SK-N-SH (cell line): ENCODE measurements at regions of chr3 and their contacts with region 1.

Region 1: DNA sequence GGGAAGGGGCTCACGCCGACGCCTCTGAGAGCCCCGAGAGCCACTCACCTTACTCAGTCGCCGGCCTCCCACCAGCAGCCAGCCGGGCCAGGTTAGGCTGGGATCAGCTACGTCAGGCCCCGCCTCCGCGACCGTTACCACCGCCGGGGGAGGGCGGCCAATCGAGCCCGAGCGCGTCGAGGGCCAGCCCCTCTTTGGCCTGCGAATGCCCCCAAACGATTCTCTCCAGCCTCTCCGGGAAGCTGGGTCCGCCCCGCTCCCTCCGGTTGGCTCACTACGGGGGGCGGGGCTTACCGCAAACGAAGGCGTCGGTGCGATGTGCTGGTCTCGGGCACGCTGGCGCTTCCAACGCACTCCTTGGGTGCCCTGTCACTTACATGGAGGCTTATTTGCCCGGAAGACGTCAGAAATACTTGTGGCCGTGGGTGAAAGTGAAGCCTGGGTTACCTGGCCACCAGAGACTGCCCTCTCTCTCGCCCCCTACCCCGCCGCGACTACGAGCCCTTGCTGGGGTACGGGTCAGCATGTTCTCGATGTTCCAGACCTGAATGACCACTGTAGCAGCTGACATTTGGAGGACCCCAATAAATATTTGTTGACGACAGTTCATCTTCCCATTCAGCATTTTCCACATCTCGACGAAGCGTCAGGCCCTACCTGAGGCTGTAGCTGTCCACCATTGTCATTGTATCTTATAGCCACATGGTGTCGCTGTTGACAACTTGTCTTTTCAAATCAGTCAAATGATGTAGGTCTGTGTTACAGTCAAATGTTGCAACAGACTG is at the start of gene CEP70:
- DNase-seq: peak; percentile 95
- H3K4me3 ChIP-seq: peak within 1 kb of the TSS; percentile 79 to 92
- H3K27ac ChIP-seq: peak within 1 kb of the TSS; percentile 72 to 85
- H3K4me1 ChIP-seq: peaks cover 0 to 7% of the 10 kb centered on the region in 2 experiments; a peak in 2 of 4 replicates
- H3K27me3 ChIP-seq: no peaks in the 10 kb centered on the region
- CTCF ChIP-seq: peak; percentile 88
- EP300 ChIP-seq: no peak
- RAD21 ChIP-seq: peak; percentile 90
- polyA plus RNA-seq, gene CEP70: 3.7 and 4.0 TPM in 2 replicates

Region 2: GRCh38 chr3:138417559-138417982 is 176.8 kb before region 1 on chr3:
- CTCF ChIA-PET with region 1: interaction called, 16 read pairs
- POLR2A ChIA-PET with region 1: no interaction called
- DNase-seq: peak; percentile 80
- H3K4me3 ChIP-seq: peak overlapping the region in 1 of 2 experiments; percentile 17; a peak in 1 of 4 replicates
- H3K27ac ChIP-seq: no peak overlapping the region
- H3K4me1 ChIP-seq: no peaks in the 10 kb centered on the region; a peak in 2 of 4 replicates
- H3K27me3 ChIP-seq: no peaks in the 10 kb centered on the region
- CTCF ChIP-seq: peak; percentile 93
- EP300 ChIP-seq: no peak
- RAD21 ChIP-seq: peak; percentile 78

Region 3: DNA sequence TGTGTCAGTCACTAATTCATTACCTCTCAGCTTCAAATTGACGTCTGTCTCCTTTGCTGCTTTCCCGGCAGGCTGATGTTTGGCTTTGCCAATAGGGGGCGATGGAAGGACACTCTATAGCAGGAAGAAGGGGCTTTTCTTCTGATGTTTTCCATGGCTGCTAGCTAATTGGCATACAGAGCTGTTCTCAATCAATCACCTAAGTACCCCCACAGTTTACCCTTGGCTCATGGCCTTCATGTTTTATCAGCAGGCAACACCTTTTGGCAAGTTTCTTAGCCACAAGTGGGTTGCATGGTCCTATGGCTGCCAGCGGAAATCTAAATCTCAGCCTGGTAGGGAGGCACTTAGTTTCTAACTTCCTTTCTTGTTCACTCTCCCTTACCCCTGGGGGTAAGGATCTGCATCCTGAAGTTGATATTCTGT is 114.9 kb before region 1 on chr3:
- CTCF ChIA-PET with region 1: interaction called, 21 read pairs
- POLR2A ChIA-PET with region 1: no interaction called
- DNase-seq: peak; percentile 69
- H3K4me3 ChIP-seq: no peak overlapping the region; a peak in 1 of 4 replicates
- H3K27ac ChIP-seq: no peak overlapping the region
- H3K4me1 ChIP-seq: no peaks in the 10 kb centered on the region
- H3K27me3 ChIP-seq: no peaks in the 10 kb centered on the region
- CTCF ChIP-seq: peak; percentile 87
- EP300 ChIP-seq: no peak
- RAD21 ChIP-seq: peak; percentile 78

Region 4: DNA sequence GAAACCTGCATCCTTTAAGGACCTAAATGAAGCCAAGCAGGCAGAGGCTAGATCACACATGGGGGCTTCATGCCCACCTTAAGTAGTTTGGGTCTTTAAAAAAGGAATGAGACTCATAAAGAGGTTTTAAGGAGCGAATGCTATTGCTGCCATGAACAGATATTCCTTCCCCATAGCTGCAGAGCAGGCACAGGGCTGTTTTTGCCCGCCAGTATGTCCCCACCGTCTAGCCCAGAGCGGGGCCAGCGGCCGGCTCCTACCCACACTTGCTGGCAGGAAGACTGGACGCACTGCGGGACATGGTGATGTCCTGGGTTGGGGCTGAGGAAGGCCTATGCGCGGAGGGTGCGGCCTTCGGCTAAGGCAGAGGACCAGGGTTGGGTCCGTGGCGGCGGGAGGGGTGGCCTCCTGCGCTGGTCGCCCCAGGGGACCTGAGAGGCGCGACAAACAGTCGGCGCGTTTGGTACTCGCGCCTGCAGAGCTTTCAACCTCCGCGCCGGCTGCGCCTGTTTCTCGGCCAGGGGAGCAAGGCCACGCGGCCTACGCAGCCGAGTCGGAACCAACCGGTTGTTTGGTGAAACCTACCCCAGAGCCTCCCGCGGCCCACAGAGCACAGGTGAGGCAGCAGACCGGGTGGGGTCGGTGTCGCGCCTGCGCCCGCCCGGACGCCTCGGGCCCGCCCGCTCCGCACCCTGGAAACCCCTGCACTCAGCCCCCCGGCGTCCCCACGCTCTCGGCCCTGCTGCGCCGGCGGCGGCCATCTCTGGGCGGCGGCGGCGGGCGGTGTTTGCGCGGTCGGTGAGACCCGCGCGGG is 14.2 kb after region 1 on chr3 and contains the start of gene FAIM:
- CTCF ChIA-PET with region 1: interaction called, 9 read pairs
- POLR2A ChIA-PET with region 1: interaction called, 15 read pairs
- DNase-seq: peak; percentile 86
- H3K4me3 ChIP-seq: peak within 1 kb of the TSS; percentile 57 to 71
- H3K27ac ChIP-seq: peak within 1 kb of the TSS; percentile 50 to 87
- H3K4me1 ChIP-seq: peaks cover 0 to 5% of the 10 kb centered on the region in 2 experiments; a peak in 1 of 4 replicates
- H3K27me3 ChIP-seq: no peaks in the 10 kb centered on the region
- CTCF ChIP-seq: no peak
- EP300 ChIP-seq: no peak
- RAD21 ChIP-seq: no peak
- polyA plus RNA-seq, gene FAIM: 3.0 and 3.1 TPM in 2 replicates

Region 5: DNA sequence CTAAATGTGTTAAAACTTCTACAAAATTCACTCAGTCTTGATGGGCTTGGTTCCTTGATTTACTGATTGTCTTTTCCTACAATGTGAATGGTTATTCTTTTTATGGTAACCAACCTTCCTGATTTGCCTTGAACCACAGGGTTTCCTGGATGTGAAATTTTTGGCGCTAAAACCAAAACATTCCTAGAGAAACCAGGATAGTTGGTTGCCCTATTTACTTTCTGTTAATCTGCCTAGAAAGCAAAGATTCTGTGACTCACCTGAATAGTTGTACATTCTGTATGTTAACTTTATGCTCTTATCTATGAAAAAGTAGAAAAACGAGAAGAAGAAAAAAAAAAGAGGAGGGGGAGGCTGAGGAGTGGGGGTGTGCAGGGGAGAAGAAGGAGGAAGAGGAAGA is 905.2 kb after region 1 on chr3:
- CTCF ChIA-PET with region 1: no interaction called
- POLR2A ChIA-PET with region 1: no interaction called
- DNase-seq: no peak
- H3K4me3 ChIP-seq: no peak overlapping the region
- H3K27ac ChIP-seq: no peak overlapping the region
- H3K4me1 ChIP-seq: no peaks in the 10 kb centered on the region
- H3K27me3 ChIP-seq: no peaks in the 10 kb centered on the region
- CTCF ChIP-seq: no peak
- EP300 ChIP-seq: no peak
- RAD21 ChIP-seq: no peak